ENCODE measurements at regions of chr2 and their contacts with region 1.

Region 1: DNA sequence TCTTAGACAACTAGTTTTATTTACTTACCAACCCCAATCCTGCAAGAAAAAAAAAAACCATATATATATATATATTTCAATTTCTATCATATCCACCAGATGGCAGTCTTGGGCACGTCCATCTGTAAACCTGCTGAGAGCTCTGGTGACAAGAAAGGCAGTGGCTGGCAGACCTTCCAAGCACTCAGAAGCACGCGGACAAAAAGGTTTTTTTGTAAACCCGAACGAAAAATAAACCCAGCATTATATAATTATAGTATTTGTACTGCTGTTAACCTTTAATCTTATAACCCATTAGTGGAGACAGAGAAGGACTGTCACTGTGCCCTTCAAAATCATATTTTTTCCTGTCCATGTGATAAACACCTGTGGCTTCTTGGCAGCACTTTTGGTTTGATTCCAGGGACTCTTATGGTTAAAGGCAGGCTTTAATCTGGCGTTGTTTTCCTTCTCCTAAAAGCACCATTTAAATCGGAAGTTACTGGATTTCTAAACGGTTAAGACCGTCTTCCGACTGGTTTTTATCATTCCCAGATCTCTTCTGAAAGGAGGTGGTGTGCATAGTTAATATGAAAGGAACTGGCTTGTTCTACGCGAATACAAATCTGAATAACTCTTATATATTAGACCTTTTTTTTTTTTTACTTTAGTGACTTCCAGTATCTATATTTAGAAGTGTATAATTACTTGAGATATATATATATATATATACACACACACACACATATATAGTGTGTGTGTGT is 31.0 kb upstream of the SLC3A1 start:
- DNase-seq: peak; percentile 75
- H3K4me3 ChIP-seq: peak overlapping the region; percentile 43 to 55
- H3K27ac ChIP-seq: no peak overlapping the region
- H3K4me1 ChIP-seq: peaks cover 3 to 5% of the 10 kb centered on the region in 2 experiments; a peak in 2 of 4 replicates
- H3K27me3 ChIP-seq: no peaks in the 10 kb centered on the region
- CTCF ChIP-seq: peak; percentile 70
- EP300 ChIP-seq: no peak
- RAD21 ChIP-seq: peak; percentile 72

Region 2: GRCh38 chr2:43995733-43996533 is 248.4 kb before region 1 on chr2 and contains the start of gene LRPPRC:
- CTCF ChIA-PET with region 1: no interaction called
- POLR2A ChIA-PET with region 1: no interaction called
- DNase-seq: peak; percentile 98
- H3K4me3 ChIP-seq: peak within 1 kb of the TSS; percentile 91 to 98
- H3K27ac ChIP-seq: peak within 1 kb of the TSS; percentile 72 to 92
- H3K4me1 ChIP-seq: peaks cover 9 to 14% of the 10 kb centered on the region in 2 experiments; a peak in 2 of 4 replicates
- H3K27me3 ChIP-seq: no peaks in the 10 kb centered on the region
- CTCF ChIP-seq: no peak
- EP300 ChIP-seq: peak; percentile 27 to 54; a peak in 1 of 4 replicates
- RAD21 ChIP-seq: 0 out of 2 replicates have a peak, but pooled peaks have one; percentile 1
- polyA plus RNA-seq, gene LRPPRC: 31.4 and 38.8 TPM in 2 replicates

Region 3: GRCh38 chr2:44233450-44234128 is 10.7 kb before region 1 on chr2:
- CTCF ChIA-PET with region 1: interaction called, 12 read pairs
- POLR2A ChIA-PET with region 1: interaction called, 3 read pairs
- DNase-seq: peak; percentile 15
- H3K4me3 ChIP-seq: no peak overlapping the region
- H3K27ac ChIP-seq: peak overlapping the region; percentile 19 to 33; a peak in 3 of 4 replicates
- H3K4me1 ChIP-seq: peaks cover 10 to 16% of the 10 kb centered on the region in 2 experiments
- H3K27me3 ChIP-seq: no peaks in the 10 kb centered on the region
- CTCF ChIP-seq: no peak
- EP300 ChIP-seq: peak in 1 of 2 experiments; percentile 51; a peak in 1 of 4 replicates
- RAD21 ChIP-seq: no peak

Region 4: DNA sequence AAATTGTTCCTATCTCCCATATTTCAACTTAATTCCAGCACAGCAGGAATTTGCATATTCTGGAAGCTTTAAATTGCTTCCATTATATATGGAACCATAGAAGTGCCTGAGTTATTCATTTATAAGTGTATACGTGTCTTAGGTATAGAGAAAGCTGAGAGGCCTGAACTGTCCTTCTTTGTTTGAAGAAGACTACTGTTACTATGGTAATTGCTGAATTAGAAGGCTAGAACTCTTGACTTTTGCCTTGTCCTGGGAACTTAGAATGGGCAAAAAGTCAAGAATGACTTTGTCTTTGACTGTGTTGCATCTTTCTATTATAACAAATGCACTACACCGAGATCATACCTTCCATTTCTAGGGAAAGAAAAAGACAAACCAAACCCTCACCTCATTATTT is 133.2 kb after region 1 on chr2:
- CTCF ChIA-PET with region 1: no interaction called
- POLR2A ChIA-PET with region 1: no interaction called
- DNase-seq: no peak
- H3K4me3 ChIP-seq: no peak overlapping the region
- H3K27ac ChIP-seq: no peak overlapping the region
- H3K4me1 ChIP-seq: no peaks in the 10 kb centered on the region
- H3K27me3 ChIP-seq: no peaks in the 10 kb centered on the region
- CTCF ChIP-seq: no peak
- EP300 ChIP-seq: no peak
- RAD21 ChIP-seq: no peak

Region 5: DNA sequence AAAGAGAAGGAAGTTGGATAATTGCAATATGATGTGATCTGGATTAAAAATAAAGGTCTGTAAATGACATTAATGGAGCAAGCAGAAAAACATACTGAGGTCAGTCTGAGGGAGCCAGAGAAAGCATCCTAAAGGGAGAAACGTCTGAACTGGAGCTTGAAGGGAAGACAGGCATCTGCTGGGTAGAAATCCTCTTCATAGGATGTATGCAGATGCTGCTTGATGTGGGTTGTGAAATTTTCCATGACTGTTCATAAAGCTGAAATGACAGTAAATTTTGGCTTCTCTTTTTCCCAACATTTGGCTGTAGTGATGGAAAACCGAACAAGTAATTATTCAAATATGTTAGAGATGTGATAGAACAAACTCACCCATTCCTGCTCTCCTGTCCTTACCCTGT is 405.1 kb after region 1 on chr2:
- CTCF ChIA-PET with region 1: no interaction called
- POLR2A ChIA-PET with region 1: no interaction called
- DNase-seq: no peak
- H3K4me3 ChIP-seq: no peak overlapping the region
- H3K27ac ChIP-seq: peak overlapping the region in 1 of 2 experiments; percentile 12; a peak in 1 of 4 replicates
- H3K4me1 ChIP-seq: peaks cover 0 to 8% of the 10 kb centered on the region in 2 experiments; a peak in 1 of 4 replicates
- H3K27me3 ChIP-seq: no peaks in the 10 kb centered on the region
- CTCF ChIP-seq: no peak
- EP300 ChIP-seq: no peak
- RAD21 ChIP-seq: no peak

Measured in SK-N-SH (cell line).